ENCODE measurements at regions of chr15 and their contacts with region 1.

Region 1: GRCh38 chr15:38002883-38003477 is 68.5 kb downstream of the TMCO5A start:
- DNase-seq: no peak
- H3K4me3 ChIP-seq: no peak overlapping the region
- H3K27me3 ChIP-seq: no peaks in the 10 kb centered on the region
- CTCF ChIP-seq: peak; percentile 73

Region 2: DNA sequence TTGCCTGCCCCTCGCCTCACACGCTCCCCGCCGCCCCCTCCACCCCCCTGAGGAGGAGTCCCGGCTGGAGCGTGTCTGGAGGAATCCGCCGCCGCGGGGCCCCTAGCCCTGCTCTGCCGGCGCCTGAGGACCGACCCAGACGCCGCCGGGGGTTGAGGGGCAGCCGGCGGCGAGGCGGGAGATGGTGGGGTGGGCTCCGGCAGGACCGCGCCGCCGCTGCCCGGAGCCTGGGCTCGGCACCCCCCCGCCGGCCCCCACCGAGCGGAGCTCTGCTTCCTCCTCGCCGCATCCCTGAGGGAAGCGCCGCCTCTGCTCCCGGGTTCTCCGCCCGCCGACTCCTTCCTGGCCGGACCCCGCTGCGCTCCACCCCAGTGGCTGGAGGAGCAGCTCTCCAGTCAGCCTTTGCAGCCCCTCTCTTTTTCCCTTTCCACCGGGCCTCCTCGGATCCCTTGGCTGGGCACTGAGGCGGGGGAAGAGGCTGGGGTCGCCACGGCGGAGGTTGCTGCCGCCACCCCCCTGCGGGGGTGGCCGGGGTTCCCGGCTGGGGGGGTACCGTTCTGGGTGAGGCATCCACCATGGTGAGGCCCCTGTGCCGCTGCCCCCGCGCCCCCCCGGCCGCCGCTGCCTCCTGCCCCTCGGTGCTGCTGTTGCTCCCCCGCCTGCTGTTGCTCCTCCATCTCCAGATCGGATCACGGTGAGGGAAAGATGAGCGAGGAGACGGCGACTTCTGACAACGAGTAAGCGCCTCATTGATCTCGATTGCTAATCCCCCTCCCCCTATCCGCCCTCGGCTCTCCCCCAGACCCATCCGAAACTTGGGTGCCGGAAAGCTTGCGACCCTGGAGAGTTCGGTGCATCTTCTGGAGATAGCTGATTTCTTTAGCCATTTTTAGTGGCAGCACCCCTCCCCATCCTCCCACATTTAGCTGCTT is 249.8 kb after region 1 on chr15 and contains the start of gene SPRED1:
- CTCF ChIA-PET with region 1: interaction called, 15 read pairs
- POLR2A ChIA-PET with region 1: no interaction called
- DNase-seq: no peak
- H3K4me3 ChIP-seq: peak within 1 kb of the TSS; percentile 94
- H3K27me3 ChIP-seq: no peaks in the 10 kb centered on the region
- CTCF ChIP-seq: no peak
- polyA plus RNA-seq, gene SPRED1: 5.2 and 7.9 TPM in 2 replicates

Region 3: DNA sequence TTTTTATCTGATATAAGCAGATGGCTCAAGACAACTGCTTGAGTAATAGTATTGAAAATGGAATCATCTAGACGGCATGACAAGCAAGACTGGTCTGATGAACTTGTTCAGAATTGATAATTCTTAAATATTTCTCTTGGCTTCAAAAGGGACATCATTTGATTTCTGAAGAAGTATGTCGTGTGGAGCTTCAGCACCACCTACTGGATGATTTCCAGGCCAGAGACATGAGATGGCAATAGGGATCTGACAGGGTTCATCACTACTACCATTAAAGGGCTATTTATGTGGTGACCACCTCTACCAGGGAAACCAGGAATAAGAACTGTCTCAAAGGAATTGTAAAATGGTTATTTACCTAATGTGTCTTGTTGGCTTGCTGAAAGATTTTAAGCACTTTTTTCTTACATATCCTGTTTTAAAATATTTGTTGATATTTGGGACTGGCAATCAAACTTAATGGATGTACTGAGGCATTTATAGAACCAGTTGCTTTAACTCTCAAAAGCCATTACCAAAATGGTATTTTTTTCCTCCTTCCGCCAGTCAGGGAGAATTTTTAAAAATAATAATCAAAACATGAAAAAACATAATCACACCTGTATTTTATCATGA is 351.4 kb after region 1 on chr15:
- CTCF ChIA-PET with region 1: interaction called, 35 read pairs
- POLR2A ChIA-PET with region 1: no interaction called
- DNase-seq: no peak
- H3K4me3 ChIP-seq: no peak overlapping the region
- H3K27me3 ChIP-seq: no peaks in the 10 kb centered on the region
- CTCF ChIP-seq: peak; percentile 69

Region 4: GRCh38 chr15:38414357-38414756 is 411.4 kb after region 1 on chr15:
- CTCF ChIA-PET with region 1: interaction called, 50 read pairs
- POLR2A ChIA-PET with region 1: no interaction called
- DNase-seq: no peak
- H3K4me3 ChIP-seq: no peak overlapping the region
- H3K27me3 ChIP-seq: peaks cover 19% of the 10 kb centered on the region
- CTCF ChIP-seq: peak; percentile 84